Activated CD4-positive, alpha-beta T cell treated with anti-CD3 and anti-CD28 coated beads, Interleukin-2, amount 10 ng/mL, durations not matched to agents 24 days and 14 days (primary cell): ENCODE measurements at regions of chr1 and their contacts with region 1.

Region 1: GRCh38 chr1:92485381-92486257 is 1.1 kb downstream of the GFI1 start:
- DNase-seq: peak; percentile 96
- H3K4me3 Mint-ChIP-seq: peak overlapping the region; percentile 95
- H3K27ac Mint-ChIP-seq: peak overlapping the region; percentile 98
- H3K4me1 Mint-ChIP-seq: peaks cover 33% of the 10 kb centered on the region
- H3K27me3 Mint-ChIP-seq: no peaks in the 10 kb centered on the region

Region 2: DNA sequence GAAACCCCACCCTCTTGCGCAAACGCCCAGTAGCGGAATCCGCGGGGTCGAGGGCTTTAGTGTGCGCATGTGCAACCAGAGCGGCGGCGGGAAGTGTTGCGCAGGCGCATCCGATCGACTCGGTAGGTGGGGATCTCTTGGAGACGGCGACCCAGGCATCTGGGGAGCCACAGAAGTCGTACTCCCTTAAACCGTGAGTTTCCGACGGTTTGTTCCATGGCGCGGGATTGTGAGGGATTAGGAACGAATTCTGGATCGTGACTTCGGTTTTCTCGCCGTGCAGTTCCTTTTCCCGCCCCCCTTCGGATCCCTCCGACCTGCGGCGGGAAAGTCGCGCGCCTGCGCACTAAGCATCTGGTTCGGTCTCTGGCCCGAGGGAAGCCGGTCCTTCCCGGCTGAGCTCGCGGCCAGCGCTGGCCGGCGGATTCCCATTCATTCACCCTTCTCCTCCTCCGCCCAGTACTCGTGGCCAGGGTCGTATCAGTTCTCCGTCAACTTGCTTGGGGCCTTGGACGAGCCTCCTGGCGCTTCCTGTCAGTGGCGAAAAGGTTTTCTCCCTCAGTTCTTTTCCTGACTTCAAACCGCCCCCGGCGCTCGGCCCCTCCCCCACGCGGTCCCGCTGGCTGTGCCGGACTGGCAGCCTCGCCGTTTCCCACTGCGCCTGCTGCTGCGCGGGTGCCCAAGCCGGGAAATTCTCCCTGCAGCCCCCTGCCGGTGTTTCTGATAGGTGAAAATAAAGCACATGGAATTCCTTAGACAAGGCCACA is 984.7 kb before region 1 on chr1 and contains the start of gene CDC7:
- intact Hi-C with region 1: loop called (anchors 10 kb)
- DNase-seq: peak; percentile 95
- H3K4me3 Mint-ChIP-seq: no peak within 1 kb of the TSS
- H3K27ac Mint-ChIP-seq: no peak within 1 kb of the TSS
- H3K4me1 Mint-ChIP-seq: peaks cover 28% of the 10 kb centered on the region
- H3K27me3 Mint-ChIP-seq: no peaks in the 10 kb centered on the region
- total RNA-seq, gene CDC7: 21.4 and 22.3 TPM in 2 replicates

Region 3: DNA sequence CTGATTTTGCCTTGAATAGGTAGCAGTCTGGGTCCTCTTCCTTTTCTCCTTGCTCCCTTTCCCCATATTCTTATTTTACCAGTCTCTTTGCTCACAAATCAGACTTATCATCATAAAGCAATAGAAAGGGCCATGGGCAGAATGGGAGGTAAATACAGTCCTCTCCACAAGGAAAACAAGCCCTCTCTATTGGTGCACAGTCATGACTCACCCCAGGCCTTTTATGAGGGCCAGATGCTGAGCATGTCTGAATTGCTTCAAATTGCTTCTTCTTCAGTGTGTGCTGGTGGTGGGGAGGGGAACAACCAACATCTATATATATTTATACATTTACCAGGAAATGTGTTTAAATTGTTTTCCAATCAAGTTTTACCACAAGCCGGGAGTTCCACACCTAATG is 74.1 kb before region 1 on chr1:
- intact Hi-C with region 1: no loop called
- DNase-seq: no peak
- H3K4me3 Mint-ChIP-seq: peak overlapping the region; percentile 29
- H3K27ac Mint-ChIP-seq: peak overlapping the region; percentile 58
- H3K4me1 Mint-ChIP-seq: peaks cover 39% of the 10 kb centered on the region
- H3K27me3 Mint-ChIP-seq: no peaks in the 10 kb centered on the region

Region 4: DNA sequence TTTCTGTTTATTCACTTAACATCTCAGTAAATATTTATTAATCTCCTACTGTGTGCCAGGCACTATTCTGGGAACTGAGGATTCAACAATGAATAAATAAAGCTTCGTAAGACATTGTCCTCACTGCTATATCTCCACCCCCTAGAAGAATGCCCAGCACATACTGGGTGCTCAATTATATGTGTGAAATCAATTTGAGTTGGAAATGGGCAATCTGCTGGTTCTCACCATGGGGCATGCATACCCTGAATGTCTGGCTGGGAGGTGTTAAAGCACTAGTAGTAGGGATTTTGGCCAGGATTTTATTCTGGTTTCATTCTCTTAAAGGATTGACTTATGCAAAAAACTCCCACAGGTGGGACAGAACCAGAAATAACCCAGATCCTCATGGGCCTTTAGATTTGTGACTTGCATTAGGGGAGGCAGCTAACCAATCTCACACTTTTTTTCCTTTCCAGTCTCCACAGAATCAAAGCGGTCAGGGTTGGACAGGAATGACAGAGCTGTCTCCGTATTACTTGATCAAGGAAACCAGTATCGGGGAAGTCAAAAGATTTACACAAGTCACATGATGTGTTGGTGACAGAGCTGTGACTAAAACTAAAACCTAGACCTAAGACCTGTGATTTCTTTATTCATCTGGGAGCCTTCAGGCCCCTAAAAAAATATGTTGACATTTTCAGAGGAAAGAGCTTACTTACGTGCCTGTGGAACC is 11.7 kb before region 1 on chr1:
- intact Hi-C with region 1: loop called (anchors 1 kb)
- DNase-seq: peak; percentile 80
- H3K4me3 Mint-ChIP-seq: peak overlapping the region; percentile 48
- H3K27ac Mint-ChIP-seq: peak overlapping the region; percentile 89
- H3K4me1 Mint-ChIP-seq: peaks cover 67% of the 10 kb centered on the region
- H3K27me3 Mint-ChIP-seq: no peaks in the 10 kb centered on the region

Region 5: DNA sequence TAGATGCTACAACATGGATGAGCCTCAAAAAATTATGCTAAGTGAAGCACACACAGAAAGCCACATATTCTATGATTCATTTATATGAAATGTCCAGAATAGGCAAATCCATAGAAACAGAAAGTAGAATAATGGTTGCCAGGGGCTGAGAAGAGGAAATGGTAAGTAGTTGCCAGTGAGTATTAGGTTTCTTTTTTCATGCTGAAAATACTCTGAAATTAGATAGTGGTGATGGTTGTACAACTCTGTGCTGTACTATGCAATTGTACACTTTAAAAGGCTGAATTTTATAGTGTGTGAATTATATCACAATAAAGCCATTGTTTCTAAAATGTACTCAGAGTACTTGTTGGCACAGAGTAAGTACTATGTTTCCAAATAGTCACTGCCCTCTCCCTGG is 16.6 kb after region 1 on chr1:
- intact Hi-C with region 1: loop called (anchors 2 kb)
- DNase-seq: no peak
- H3K4me3 Mint-ChIP-seq: no peak overlapping the region
- H3K27ac Mint-ChIP-seq: peak overlapping the region; percentile 57
- H3K4me1 Mint-ChIP-seq: peaks cover 32% of the 10 kb centered on the region
- H3K27me3 Mint-ChIP-seq: no peaks in the 10 kb centered on the region

Region 6: GRCh38 chr1:92577261-92577895 is 91.8 kb after region 1 on chr1:
- intact Hi-C with region 1: loop called (anchors 2 kb)
- DNase-seq: peak; percentile 72
- H3K4me3 Mint-ChIP-seq: peak overlapping the region; percentile 96
- H3K27ac Mint-ChIP-seq: peak overlapping the region; percentile 96
- H3K4me1 Mint-ChIP-seq: peaks cover 57% of the 10 kb centered on the region
- H3K27me3 Mint-ChIP-seq: no peaks in the 10 kb centered on the region

Region 7: GRCh38 chr1:92583821-92584760 is 98.5 kb after region 1 on chr1:
- intact Hi-C with region 1: loop called (anchors 1 kb)
- DNase-seq: no peak
- H3K4me3 Mint-ChIP-seq: peak overlapping the region; percentile 74
- H3K27ac Mint-ChIP-seq: peak overlapping the region; percentile 92
- H3K4me1 Mint-ChIP-seq: peaks cover 50% of the 10 kb centered on the region
- H3K27me3 Mint-ChIP-seq: no peaks in the 10 kb centered on the region

Region 8: GRCh38 chr1:92980732-92981647 is 495.4 kb after region 1 on chr1:
- intact Hi-C with region 1: loop called (anchors 5 kb)
- DNase-seq: peak; percentile 87
- H3K4me3 Mint-ChIP-seq: peak overlapping the region; percentile 78
- H3K27ac Mint-ChIP-seq: peak overlapping the region; percentile 97
- H3K4me1 Mint-ChIP-seq: peaks cover 60% of the 10 kb centered on the region
- H3K27me3 Mint-ChIP-seq: no peaks in the 10 kb centered on the region